ENCODE measurements at regions of chr16 and their contacts with region 1.

Region 1: DNA sequence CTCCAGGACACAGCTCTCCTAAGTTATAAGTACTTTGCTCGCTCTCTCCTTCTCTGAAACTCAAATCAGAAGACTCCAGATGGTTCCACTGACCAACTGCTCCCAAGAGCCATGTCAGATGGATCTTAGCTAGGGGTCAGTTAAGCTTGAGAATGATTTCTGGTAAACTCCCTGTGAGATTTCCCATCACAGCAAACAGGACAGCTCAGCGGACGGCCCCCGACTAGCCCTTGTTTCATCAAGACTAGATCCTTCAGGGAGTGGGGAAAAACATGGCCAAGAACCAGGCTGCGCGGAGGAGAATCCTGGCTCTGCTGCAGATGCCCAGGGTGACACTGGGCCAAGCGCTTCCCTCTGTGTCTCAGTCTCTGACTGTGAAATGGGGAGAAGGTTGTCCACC is 159.8 kb downstream of the C16orf78 start:
- DNase-seq: no peak
- ATAC-seq: no peak
- H3K4me3 ChIP-seq: no peak overlapping the region
- H3K27ac ChIP-seq: no peak overlapping the region
- H3K4me1 ChIP-seq: peaks cover 0 to 20% (median 2%) of the 10 kb centered on the region in 12 donors
- H3K27me3 ChIP-seq: no peaks in the 10 kb centered on the region
- CTCF ChIP-seq: no peak
- POLR2A ChIP-seq: no peak

Region 2: GRCh38 chr16:49498666-49499413 is 34.6 kb before region 1 on chr16:
- intact Hi-C with region 1: no loop called
- DNase-seq: no peak
- ATAC-seq: no peak
- H3K4me3 ChIP-seq: no peak overlapping the region
- H3K27ac ChIP-seq: no peak overlapping the region
- H3K4me1 ChIP-seq: no peaks in the 10 kb centered on the region
- H3K27me3 ChIP-seq: no peaks in the 10 kb centered on the region
- CTCF ChIP-seq: no peak
- POLR2A ChIP-seq: no peak

Region 3: DNA sequence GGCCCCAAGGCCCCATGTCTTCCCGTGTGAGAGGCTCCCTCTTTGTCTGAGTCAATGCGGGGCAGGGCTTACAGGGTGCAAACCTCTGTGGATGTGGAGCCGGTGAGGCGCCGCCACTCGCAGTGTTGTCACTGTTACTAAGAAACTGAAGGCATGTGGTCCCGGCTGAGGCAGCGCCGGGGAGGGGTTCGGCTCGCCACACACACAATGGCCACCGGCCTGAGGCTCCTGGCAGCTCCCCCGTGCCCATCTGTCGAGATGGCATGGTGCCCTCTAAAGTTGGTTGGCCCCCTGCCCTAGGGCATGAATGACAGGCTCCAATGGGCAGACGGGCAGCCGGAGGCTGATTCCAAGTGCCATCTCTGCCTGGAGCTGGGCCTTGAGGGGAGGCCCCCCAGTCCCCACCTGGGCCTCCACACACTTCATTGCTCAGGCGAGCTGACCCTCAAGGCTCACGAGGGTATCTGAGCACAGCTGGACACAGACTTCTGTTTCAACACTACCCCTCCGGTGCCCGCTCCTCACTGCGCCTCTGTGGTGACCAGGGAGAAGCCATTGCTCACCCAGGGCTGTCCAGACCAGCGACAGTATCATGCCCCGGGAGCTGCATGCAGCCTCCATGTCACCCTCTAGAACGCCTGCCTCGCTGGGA is 22.6 kb before region 1 on chr16:
- intact Hi-C with region 1: loop called in 1 of 10 experiments (anchors 1 kb)
- DNase-seq: no peak
- ATAC-seq: no peak
- H3K4me3 ChIP-seq: no peak overlapping the region
- H3K27ac ChIP-seq: no peak overlapping the region
- H3K4me1 ChIP-seq: no peaks in the 10 kb centered on the region
- H3K27me3 ChIP-seq: no peaks in the 10 kb centered on the region
- CTCF ChIP-seq: no peak
- POLR2A ChIP-seq: no peak